Breast epithelium (tissue), 4 donors: ENCODE measurements at regions of chr2 and their contacts with region 1.

Region 1: GRCh38 chr2:212815453-212815852 is 276.9 kb upstream of the ERBB4 start:
- DNase-seq: no peak
- H3K4me3 ChIP-seq: no peak overlapping the region
- H3K27ac ChIP-seq: no peak overlapping the region
- H3K4me1 ChIP-seq: no peaks in the 10 kb centered on the region
- H3K27me3 ChIP-seq: no peaks in the 10 kb centered on the region
- CTCF ChIP-seq: no peak
- POLR2A ChIP-seq: no peak

Region 2: DNA sequence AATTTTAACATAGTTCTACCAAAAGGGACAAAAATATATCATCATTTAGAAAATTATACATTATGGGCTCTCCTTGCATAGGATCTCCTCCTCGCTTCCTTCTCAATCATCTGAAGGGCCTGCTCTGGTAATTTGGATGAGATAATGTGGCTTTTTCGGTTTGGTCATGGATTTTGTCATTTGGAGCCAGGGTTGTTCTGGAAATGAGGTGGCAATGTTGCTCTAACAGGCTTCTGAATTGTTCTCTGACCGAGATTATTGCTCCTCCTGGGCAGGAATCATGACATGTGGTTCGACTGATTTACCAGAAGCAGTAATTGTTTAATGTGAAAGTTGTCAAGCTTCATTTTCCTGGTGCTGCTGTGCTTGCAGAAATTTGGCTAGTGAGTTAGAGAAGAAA is 82.2 kb before region 1 on chr2:
- intact Hi-C with region 1: no loop called
- DNase-seq: no peak
- H3K4me3 ChIP-seq: no peak overlapping the region
- H3K27ac ChIP-seq: no peak overlapping the region
- H3K4me1 ChIP-seq: no peaks in the 10 kb centered on the region
- H3K27me3 ChIP-seq: no peaks in the 10 kb centered on the region
- CTCF ChIP-seq: no peak
- POLR2A ChIP-seq: no peak

Region 3: GRCh38 chr2:214185546-214185945 is 1370.1 kb after region 1 on chr2:
- intact Hi-C with region 1: loop called (anchors 10 kb)
- DNase-seq: no peak
- H3K4me3 ChIP-seq: no peak overlapping the region
- H3K27ac ChIP-seq: no peak overlapping the region
- H3K4me1 ChIP-seq: no peaks in the 10 kb centered on the region
- H3K27me3 ChIP-seq: no peaks in the 10 kb centered on the region
- CTCF ChIP-seq: no peak
- POLR2A ChIP-seq: no peak

Region 4: GRCh38 chr2:214255046-214255445 is 1439.6 kb after region 1 on chr2:
- intact Hi-C with region 1: no loop called
- DNase-seq: no peak
- H3K4me3 ChIP-seq: no peak overlapping the region
- H3K27ac ChIP-seq: no peak overlapping the region
- H3K4me1 ChIP-seq: no peaks in the 10 kb centered on the region
- H3K27me3 ChIP-seq: no peaks in the 10 kb centered on the region
- CTCF ChIP-seq: no peak
- POLR2A ChIP-seq: no peak